Activated CD4-positive, alpha-beta T cell treated with anti-CD3 and anti-CD28 coated beads for 36 hours (primary cell): ENCODE measurements at regions of chr14 and their contacts with region 1.

Region 1: GRCh38 chr14:90970167-90970600 is 90.3 kb downstream of the RPS6KA5 start:
- DNase-seq: no peak
- ATAC-seq: peak; percentile 91
- H3K4me3 Mint-ChIP-seq: peak overlapping the region; percentile 59
- H3K27ac Mint-ChIP-seq: peak overlapping the region; percentile 95
- H3K4me1 Mint-ChIP-seq: peaks cover 48% of the 10 kb centered on the region
- H3K27me3 Mint-ChIP-seq: no peaks in the 10 kb centered on the region

Region 2: GRCh38 chr14:90383075-90383730 is 587.0 kb before region 1 on chr14:
- CTCF ChIA-PET with region 1: no interaction called
- POLR2A ChIA-PET with region 1: interaction called, 4 read pairs
- intact Hi-C with region 1: loop called in 1 of 2 experiments (anchors 10 kb)
- DNase-seq: peak; percentile 99
- ATAC-seq: peak; percentile 89
- H3K4me3 Mint-ChIP-seq: no peak overlapping the region
- H3K27ac Mint-ChIP-seq: no peak overlapping the region
- H3K4me1 Mint-ChIP-seq: peaks cover 27% of the 10 kb centered on the region
- H3K27me3 Mint-ChIP-seq: no peaks in the 10 kb centered on the region

Region 3: GRCh38 chr14:90959344-90959743 is 10.8 kb before region 1 on chr14:
- CTCF ChIA-PET with region 1: interaction called, 7 read pairs
- POLR2A ChIA-PET with region 1: interaction called, 4 read pairs
- intact Hi-C with region 1: loop called in 1 of 2 experiments (anchors 1 kb)
- DNase-seq: no peak
- ATAC-seq: peak; percentile 94
- H3K4me3 Mint-ChIP-seq: no peak overlapping the region
- H3K27ac Mint-ChIP-seq: no peak overlapping the region
- H3K4me1 Mint-ChIP-seq: peaks cover 12% of the 10 kb centered on the region
- H3K27me3 Mint-ChIP-seq: no peaks in the 10 kb centered on the region

Region 4: DNA sequence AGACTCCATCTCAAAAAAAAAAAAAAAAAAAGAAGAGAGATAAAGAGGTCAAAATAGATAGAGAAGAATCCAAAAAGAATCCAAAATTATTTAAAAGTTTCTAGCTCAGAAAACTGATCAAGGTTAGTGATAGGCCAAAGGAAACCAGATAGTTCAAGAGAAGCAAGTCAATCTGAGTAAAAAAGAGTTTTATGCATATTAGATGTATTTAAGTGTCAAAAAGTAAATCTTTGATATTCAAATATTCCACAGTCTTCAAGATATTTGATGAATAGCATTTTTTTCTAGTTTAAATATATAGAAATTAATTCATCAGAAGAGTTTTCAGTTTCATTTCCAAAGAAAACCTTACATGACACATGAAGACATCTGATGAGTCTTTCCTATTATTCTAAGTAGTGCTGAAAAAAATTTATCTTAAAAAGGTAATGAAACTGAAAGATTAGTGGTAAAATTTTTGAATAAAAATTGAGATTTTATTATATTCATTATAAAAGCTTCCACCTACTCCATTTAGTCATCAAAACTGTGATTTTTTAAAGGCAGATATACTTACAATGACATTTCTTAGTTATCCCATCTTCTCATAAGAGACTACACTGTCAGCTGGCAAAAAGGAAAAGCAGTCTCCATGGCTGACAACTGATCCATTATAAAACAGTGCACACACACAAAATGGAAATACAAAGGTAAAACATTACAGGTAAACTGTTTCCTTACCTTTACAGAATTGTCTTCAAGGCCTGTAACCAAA is 21.7 kb after region 1 on chr14:
- CTCF ChIA-PET with region 1: interaction called, 4 read pairs
- POLR2A ChIA-PET with region 1: no interaction called
- intact Hi-C with region 1: loop called in 1 of 2 experiments (anchors 1 kb)
- DNase-seq: no peak
- ATAC-seq: peak; percentile 31
- H3K4me3 Mint-ChIP-seq: peak overlapping the region; percentile 31
- H3K27ac Mint-ChIP-seq: peak overlapping the region; percentile 59
- H3K4me1 Mint-ChIP-seq: peaks cover 52% of the 10 kb centered on the region
- H3K27me3 Mint-ChIP-seq: no peaks in the 10 kb centered on the region

Region 5: DNA sequence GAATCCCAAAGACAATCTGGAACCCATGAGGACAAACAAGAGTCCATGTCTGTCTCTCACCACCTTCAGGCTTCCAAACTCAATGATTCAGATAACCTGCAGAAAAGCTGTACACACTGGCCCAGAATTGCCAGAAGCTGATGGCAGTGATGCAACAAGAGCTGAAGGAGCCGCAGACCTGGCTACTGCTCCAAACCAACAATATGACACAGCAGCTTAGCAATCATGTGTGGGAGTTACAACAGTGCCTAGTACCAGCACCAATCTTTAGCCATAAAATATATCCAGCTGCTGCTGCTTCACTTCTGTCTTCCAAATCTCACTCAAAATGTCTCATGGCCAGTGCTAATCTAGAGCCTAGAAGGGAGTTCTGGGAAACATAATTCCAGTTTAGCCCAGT is 68.3 kb after region 1 on chr14:
- CTCF ChIA-PET with region 1: no interaction called
- POLR2A ChIA-PET with region 1: interaction called, 6 read pairs
- intact Hi-C with region 1: loop called in 1 of 2 experiments (anchors 1 kb)
- DNase-seq: peak; percentile 24
- ATAC-seq: peak; percentile 41
- H3K4me3 Mint-ChIP-seq: no peak overlapping the region
- H3K27ac Mint-ChIP-seq: peak overlapping the region; percentile 49
- H3K4me1 Mint-ChIP-seq: peaks cover 64% of the 10 kb centered on the region
- H3K27me3 Mint-ChIP-seq: no peaks in the 10 kb centered on the region

Region 6: GRCh38 chr14:91228112-91229004 is 258.2 kb after region 1 on chr14:
- CTCF ChIA-PET with region 1: no interaction called
- POLR2A ChIA-PET with region 1: no interaction called
- intact Hi-C with region 1: loop called (anchors 1 to 5 kb)
- DNase-seq: peak; percentile 95
- ATAC-seq: peak; percentile 87
- H3K4me3 Mint-ChIP-seq: peak overlapping the region; percentile 67
- H3K27ac Mint-ChIP-seq: peak overlapping the region; percentile 100
- H3K4me1 Mint-ChIP-seq: peaks cover 95% of the 10 kb centered on the region
- H3K27me3 Mint-ChIP-seq: no peaks in the 10 kb centered on the region

Region 7: GRCh38 chr14:91350813-91351511 is 380.8 kb after region 1 on chr14:
- CTCF ChIA-PET with region 1: no interaction called
- POLR2A ChIA-PET with region 1: no interaction called
- intact Hi-C with region 1: loop called in 1 of 2 experiments (anchors 1 kb)
- DNase-seq: peak; percentile 81
- ATAC-seq: peak; percentile 59
- H3K4me3 Mint-ChIP-seq: peak overlapping the region; percentile 65
- H3K27ac Mint-ChIP-seq: peak overlapping the region; percentile 92
- H3K4me1 Mint-ChIP-seq: peaks cover 95% of the 10 kb centered on the region
- H3K27me3 Mint-ChIP-seq: no peaks in the 10 kb centered on the region